CD14-positive monocyte (primary cell): ENCODE measurements at regions of chr2 and their contacts with region 1.

Region 1: GRCh38 chr2:5673145-5674025 is 18.8 kb upstream of the SOX11 start:
- DNase-seq: no peak
- H3K4me3 ChIP-seq: no peak overlapping the region
- H3K4me3 Mint-ChIP-seq: peak overlapping the region in 1 of 2 donors; percentile 72
- H3K27ac ChIP-seq: no peak overlapping the region
- H3K27ac Mint-ChIP-seq: no peak overlapping the region
- H3K4me1 ChIP-seq: no peaks in the 10 kb centered on the region
- H3K4me1 Mint-ChIP-seq: no peaks in the 10 kb centered on the region
- H3K27me3 ChIP-seq: peaks cover 11 to 33% of the 10 kb centered on the region in 2 donors
- H3K27me3 Mint-ChIP-seq: peaks cover 11 to 21% (median 18%) of the 10 kb centered on the region in 3 donors
- CTCF ChIP-seq: no peak

Region 2: DNA sequence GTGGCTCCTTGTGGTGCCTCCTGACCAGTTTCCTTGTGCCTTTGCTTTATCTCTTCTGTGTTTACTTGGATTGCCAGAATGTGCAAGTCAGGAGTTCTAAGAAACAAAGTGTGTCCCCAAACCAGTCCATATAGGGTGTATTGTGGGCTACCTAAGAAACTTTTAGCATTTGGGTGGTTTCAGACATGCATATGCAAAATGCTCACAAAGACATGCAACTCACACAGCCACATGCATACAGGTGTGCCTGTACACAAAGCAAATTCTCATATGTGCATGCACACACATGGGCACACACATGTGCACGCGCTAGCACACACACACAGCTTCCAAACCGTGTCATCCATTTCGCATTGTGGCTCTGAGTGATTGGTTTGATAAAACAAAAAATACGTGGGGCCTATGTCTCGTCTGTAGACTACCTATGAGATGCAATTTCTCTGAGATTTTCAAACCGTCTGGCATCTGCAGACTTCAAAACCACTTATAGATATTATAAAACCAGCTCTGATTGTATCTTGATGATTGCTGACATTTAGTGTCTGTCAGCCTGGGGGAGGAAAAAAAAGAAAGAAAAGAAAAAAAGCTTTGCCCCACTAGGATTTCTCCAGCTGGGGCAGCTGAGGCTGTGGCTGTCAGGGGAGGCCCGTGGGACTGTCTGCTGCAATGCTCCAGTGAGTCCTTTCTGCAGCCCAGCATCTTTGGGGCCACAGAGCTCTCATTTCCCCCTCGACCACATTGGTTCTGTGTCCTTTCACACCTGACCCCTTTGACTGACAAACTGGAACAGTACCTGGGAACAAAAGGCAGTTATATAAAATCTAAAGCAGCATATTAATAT is 636.2 kb after region 1 on chr2:
- intact Hi-C with region 1: loop called in 1 of 2 experiments (anchors 10 kb)
- DNase-seq: no peak
- H3K4me3 ChIP-seq: no peak overlapping the region
- H3K4me3 Mint-ChIP-seq: no peak overlapping the region
- H3K27ac ChIP-seq: no peak overlapping the region
- H3K27ac Mint-ChIP-seq: peak overlapping the region in 1 of 7 donors; percentile 61
- H3K4me1 ChIP-seq: no peaks in the 10 kb centered on the region
- H3K4me1 Mint-ChIP-seq: no peaks in the 10 kb centered on the region
- H3K27me3 ChIP-seq: no peaks in the 10 kb centered on the region
- H3K27me3 Mint-ChIP-seq: peaks cover 0 to 2% (median 0%) of the 10 kb centered on the region in 3 donors
- CTCF ChIP-seq: no peak